PC-9 (cell line): ENCODE measurements at regions of chr3 and their contacts with region 1.

Region 1: DNA sequence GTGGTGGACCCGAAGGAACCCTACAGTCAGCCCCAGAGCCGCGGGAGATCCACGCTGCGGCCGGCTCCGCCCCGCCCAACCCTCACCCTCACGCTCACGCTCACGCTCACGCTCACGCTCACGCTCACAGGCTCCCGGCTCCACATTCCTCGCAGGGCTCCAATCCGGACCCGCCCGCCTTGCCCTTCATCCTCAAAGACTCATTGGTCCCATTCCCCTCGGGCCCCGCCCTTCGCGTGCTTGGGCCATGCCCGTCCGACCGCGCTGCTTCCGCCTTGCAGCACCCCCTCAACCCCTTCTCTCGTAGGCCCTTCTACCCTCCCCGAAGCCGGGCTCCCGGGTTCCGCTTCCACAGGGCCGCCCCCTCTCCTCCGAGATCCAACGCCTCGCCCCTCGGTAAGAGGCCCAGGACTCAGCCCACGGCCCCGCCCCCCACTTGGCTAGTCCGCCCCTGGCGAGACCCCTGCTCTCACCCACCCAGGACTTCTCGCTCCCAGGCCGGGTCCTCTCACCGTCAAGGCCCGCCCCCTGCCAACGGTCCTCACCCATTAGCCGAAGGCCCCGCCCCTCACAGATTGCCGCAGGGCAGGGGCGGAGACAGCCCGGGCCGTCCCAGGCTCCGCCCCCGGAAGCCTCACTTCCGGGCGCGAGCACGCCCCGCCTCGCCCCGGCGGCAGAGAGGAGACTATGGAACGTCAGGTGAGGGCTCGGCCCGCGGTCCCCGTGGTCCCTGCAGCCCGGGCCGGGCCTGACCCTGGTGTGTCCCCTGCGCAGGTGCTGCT is at the start of gene APEH:
- DNase-seq: peak; percentile 93 to 99
- H3K4me3 ChIP-seq: peak within 1 kb of the TSS; percentile 86
- H3K27ac ChIP-seq: peak within 1 kb of the TSS; percentile 94
- H3K4me1 ChIP-seq: peaks cover 20% of the 10 kb centered on the region
- H3K27me3 ChIP-seq: no peaks in the 10 kb centered on the region
- CTCF ChIP-seq: no peak
- total RNA-seq, gene APEH: 131 TPM in 2 replicates

Region 2: DNA sequence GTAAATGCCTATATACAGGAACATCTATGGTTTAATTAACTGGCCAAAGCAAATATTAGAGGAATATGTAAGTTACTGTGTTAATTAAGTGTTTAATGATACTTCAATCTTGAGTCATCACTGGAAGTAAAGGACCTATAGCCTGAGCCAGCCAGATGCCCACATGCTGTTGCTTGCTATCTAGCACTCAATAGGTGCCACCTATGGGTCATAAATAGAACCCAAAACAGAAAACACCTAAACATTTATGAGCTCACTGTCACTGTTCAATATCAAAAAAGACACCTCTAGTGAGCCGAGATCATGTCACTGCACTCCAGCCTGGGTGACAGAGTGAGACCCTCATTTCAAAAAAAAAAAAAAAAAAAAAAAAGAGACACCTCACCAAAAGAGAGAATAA is 908.5 kb before region 1 on chr3:
- CTCF ChIA-PET with region 1: no interaction called
- POLR2A ChIA-PET with region 1: no interaction called
- intact Hi-C with region 1: no loop called
- DNase-seq: no peak
- H3K4me3 ChIP-seq: no peak overlapping the region
- H3K27ac ChIP-seq: no peak overlapping the region
- H3K4me1 ChIP-seq: no peaks in the 10 kb centered on the region
- H3K27me3 ChIP-seq: no peaks in the 10 kb centered on the region
- CTCF ChIP-seq: peak; percentile 53

Region 3: GRCh38 chr3:49244581-49245205 is 429.2 kb before region 1 on chr3:
- CTCF ChIA-PET with region 1: interaction called, 11 read pairs
- POLR2A ChIA-PET with region 1: no interaction called
- intact Hi-C with region 1: no loop called
- DNase-seq: peak; percentile 69 to 93
- H3K4me3 ChIP-seq: no peak overlapping the region
- H3K27ac ChIP-seq: peak overlapping the region; percentile 86
- H3K4me1 ChIP-seq: peaks cover 37% of the 10 kb centered on the region
- H3K27me3 ChIP-seq: no peaks in the 10 kb centered on the region
- CTCF ChIP-seq: no peak

Region 4: DNA sequence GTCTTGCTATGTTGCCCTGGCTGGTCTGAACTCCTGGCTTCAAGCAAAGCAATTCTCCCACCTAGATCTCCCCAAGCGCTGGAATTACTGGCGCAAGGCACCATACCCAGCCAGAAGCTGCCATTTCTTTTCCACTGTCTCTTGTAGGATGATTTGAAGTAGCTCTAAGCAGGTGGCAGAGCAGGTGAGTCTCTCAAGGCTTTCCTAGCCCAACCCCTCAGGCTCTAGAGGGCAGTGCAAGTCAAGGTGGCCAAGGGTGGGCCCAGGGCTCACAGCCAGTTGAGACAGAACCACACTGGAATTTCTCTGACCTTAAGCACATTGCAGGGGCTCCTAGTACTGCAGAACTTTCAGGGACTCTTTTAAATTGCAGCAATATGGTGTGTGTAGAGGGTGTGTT is 219.4 kb before region 1 on chr3:
- CTCF ChIA-PET with region 1: interaction called, 5 read pairs
- POLR2A ChIA-PET with region 1: interaction called, 5 read pairs
- intact Hi-C with region 1: loop called (anchors 1 kb)
- DNase-seq: peak; percentile 75
- H3K4me3 ChIP-seq: no peak overlapping the region
- H3K27ac ChIP-seq: no peak overlapping the region
- H3K4me1 ChIP-seq: peaks cover 24% of the 10 kb centered on the region
- H3K27me3 ChIP-seq: no peaks in the 10 kb centered on the region
- CTCF ChIP-seq: peak; percentile 51; the same call in 1 of the 2 replicates

Region 5: DNA sequence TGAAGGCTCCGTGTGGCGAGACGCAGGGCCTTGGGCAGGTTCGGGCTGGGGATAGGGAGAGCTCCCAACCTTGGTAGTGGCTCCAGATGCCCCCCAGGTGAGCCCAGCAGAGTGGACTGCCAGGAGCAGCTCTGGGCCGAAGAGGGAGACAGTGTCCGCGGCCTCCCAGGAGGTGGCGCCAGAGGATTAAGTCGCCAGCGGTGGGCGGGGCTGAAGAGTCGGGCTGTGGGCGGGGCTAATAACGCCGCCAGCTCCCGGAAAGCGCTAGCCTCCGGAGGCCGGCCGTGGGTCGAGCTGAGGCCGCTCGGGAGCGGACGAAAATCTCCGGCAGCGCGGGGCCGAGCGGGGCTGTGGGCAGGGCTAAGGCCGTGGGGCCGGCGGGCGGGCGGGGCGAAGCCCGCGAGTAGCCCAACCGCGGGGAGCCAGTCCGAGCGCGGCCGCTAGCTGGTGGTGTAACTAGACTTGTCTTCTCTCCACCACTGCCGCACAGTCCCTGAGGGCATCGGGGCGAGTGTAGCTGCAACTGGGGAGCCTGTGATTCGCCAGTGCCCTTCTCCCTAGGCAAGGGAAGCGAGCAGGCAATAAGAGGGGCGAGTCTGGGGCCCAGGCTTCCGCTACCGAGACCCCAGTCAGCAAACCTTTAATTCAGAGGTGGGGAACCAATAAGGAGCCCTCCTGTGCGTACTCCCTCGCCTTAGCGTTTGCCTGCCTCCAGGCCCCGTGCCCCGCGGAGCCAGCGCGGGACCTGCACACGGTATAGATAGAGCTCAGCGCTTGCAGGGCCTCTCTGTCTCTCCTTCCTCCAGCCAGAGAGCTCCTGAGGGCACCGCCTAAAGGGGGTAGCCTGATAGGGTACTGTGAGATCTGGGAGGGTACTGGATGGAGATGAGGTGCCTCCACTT is 134.0 kb before region 1 on chr3:
- CTCF ChIA-PET with region 1: interaction called, 28 read pairs
- POLR2A ChIA-PET with region 1: interaction called, 14 read pairs
- intact Hi-C with region 1: loop called (anchors 1 kb)
- DNase-seq: peak; percentile 75 to 96
- H3K4me3 ChIP-seq: peak overlapping the region; percentile 54; the same call in 1 of the 2 replicates
- H3K27ac ChIP-seq: no peak overlapping the region
- H3K4me1 ChIP-seq: no peaks in the 10 kb centered on the region
- H3K27me3 ChIP-seq: peaks cover 23% of the 10 kb centered on the region; the same call in 1 of the 2 replicates
- CTCF ChIP-seq: peak; percentile 89

Region 6: GRCh38 chr3:49602877-49603411 is 71.0 kb before region 1 on chr3:
- CTCF ChIA-PET with region 1: no interaction called
- POLR2A ChIA-PET with region 1: no interaction called
- intact Hi-C with region 1: loop called (anchors 5 kb)
- DNase-seq: peak; percentile 64 to 83
- H3K4me3 ChIP-seq: no peak overlapping the region
- H3K27ac ChIP-seq: peak overlapping the region; percentile 67
- H3K4me1 ChIP-seq: peaks cover 52% of the 10 kb centered on the region
- H3K27me3 ChIP-seq: no peaks in the 10 kb centered on the region
- CTCF ChIP-seq: no peak

Region 7: DNA sequence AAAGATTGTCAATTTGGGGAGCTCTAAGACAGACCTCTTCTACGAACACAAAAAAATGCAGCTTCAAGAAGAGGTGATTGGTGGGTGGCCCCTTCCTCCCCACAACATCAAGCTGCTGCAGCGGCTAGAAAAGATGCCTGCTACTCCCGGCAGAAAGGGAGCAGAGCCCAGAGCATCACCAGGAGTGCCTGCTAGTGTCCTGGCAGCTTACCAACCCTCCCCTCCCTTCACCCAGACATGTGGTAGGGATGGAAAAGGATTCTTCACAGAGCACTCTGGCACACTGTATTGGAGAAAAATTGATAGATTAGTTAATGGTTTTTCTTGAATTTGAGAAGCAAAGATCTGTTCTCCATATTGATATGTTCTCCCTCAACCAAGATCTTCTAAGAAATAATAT is 101.6 kb after region 1 on chr3:
- CTCF ChIA-PET with region 1: no interaction called
- POLR2A ChIA-PET with region 1: no interaction called
- intact Hi-C with region 1: no loop called
- DNase-seq: no peak
- H3K4me3 ChIP-seq: no peak overlapping the region
- H3K27ac ChIP-seq: no peak overlapping the region
- H3K4me1 ChIP-seq: no peaks in the 10 kb centered on the region
- H3K27me3 ChIP-seq: no peaks in the 10 kb centered on the region
- CTCF ChIP-seq: no peak

Region 8: GRCh38 chr3:49831341-49831740 is 157.4 kb after region 1 on chr3:
- CTCF ChIA-PET with region 1: no interaction called
- POLR2A ChIA-PET with region 1: interaction called, 35 read pairs
- intact Hi-C with region 1: no loop called
- DNase-seq: no peak
- H3K4me3 ChIP-seq: no peak overlapping the region
- H3K27ac ChIP-seq: no peak overlapping the region
- H3K4me1 ChIP-seq: no peaks in the 10 kb centered on the region
- H3K27me3 ChIP-seq: no peaks in the 10 kb centered on the region
- CTCF ChIP-seq: no peak